ENCODE measurements at regions of chr9 and their contacts with region 1.

Region 1: GRCh38 chr9:34989003-34989945 is at the start of gene DNAJB5:
- DNase-seq: peak; percentile 99
- H3K4me3 Mint-ChIP-seq: peak within 1 kb of the TSS; percentile 89
- H3K27ac Mint-ChIP-seq: peak within 1 kb of the TSS; percentile 89
- H3K4me1 Mint-ChIP-seq: peaks cover 81% of the 10 kb centered on the region
- H3K27me3 Mint-ChIP-seq: no peaks in the 10 kb centered on the region
- total RNA-seq, gene DNAJB5: 11.5 to 12.0 TPM

Region 2: GRCh38 chr9:34328987-34329832 is 660.1 kb before region 1 on chr9 and contains the starts of genes KIF24 and NUDT2:
- CTCF ChIA-PET with region 1: no interaction called
- POLR2A ChIA-PET with region 1: no interaction called
- intact Hi-C with region 1: loop called (anchors 2 kb)
- DNase-seq: peak; percentile 98
- H3K4me3 Mint-ChIP-seq: peak within 1 kb of the TSS; percentile 97
- H3K27ac Mint-ChIP-seq: peak within 1 kb of the TSS; percentile 94
- H3K4me1 Mint-ChIP-seq: peaks cover 30% of the 10 kb centered on the region
- H3K27me3 Mint-ChIP-seq: no peaks in the 10 kb centered on the region
- total RNA-seq, gene KIF24: 5.6 to 5.7 TPM
- total RNA-seq, gene NUDT2: 42.4 to 43.3 TPM

Region 3: DNA sequence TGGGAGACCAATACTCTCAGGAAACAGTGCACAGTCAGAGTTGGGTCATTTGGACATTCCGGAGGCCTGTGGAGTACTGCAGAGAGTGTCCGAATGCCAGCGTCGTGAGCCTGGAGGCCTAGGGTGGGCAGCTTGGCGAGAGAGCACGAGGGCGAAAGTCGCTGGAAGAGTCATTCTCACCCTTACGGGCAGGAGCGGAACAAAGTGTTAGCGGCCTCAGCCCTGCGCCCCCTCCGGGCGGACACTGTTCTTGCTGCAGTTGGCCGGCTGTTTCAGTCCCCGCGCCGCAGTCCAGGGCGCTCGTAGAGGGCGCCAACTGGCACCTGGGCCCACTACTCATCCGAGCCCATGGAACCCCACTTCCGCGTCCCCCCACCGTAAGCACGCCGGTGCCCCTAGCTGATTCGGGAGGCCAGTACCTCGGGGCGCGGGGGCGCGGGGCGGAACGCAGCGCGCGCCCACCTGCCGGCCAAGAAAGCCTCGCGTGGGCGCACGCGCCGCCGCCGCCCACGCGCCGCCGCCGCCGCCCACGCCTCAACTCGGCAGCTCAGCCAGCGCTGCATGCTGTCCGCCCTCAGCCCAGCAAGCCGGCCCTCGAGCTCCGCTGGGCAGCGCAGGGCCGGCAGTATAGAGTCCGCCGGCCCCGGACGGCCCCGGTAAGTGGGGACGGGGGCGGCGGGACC is 179.6 kb before region 1 on chr9:
- CTCF ChIA-PET with region 1: no interaction called
- POLR2A ChIA-PET with region 1: no interaction called
- intact Hi-C with region 1: no loop called
- DNase-seq: no peak
- H3K4me3 Mint-ChIP-seq: no peak overlapping the region
- H3K27ac Mint-ChIP-seq: no peak overlapping the region
- H3K4me1 Mint-ChIP-seq: peaks cover 3% of the 10 kb centered on the region
- H3K27me3 Mint-ChIP-seq: peaks cover 43% of the 10 kb centered on the region

Region 4: DNA sequence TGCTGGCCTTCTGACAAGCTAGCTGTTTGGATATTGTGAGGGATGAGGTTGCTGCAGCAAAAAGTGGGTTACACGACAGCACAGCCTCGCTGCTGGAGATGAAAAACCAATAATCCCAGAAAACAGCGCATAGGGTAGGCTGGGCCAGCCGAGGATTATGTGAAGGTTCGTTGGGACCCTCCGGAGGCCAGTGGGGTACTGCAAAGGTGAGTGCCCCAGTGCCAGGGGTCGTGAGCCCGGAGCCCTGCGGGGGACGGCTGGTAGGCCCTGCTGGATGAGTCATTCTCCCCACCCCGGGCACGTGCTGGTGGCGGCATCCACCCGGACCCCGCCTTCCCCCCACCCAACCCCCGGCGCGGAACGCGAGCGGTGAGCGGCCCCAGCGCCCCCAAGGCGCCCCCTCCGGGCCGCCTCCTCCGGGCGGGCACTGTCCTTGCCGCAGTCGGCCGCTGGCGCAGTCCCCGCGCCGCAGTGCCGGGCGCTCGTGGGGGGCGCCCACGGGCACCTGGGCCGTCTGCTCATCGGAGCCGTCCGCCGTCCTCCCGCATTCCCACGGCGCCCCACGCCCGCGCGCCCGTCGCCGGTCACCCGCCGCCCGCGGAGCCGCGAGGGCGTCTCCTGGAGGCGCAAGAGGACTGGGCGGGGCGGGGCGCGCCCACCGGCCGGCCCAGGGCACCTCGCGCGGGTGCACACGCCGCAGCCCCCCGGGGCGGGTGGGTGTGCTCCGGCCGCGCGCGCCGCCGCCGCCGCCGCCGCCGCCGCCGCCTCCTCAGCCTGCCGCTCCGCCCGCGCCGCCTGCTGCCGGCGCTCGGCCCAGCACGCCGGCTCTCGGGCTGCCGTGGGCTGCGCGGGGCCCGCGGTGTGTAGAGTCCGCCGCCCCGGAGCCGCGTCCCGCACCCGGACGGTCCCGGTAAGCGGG is 31.5 kb before region 1 on chr9 and contains the start of gene PHF24:
- CTCF ChIA-PET with region 1: interaction called, 22 read pairs
- POLR2A ChIA-PET with region 1: interaction called, 3 read pairs
- intact Hi-C with region 1: loop called (anchors 2 kb)
- DNase-seq: peak; percentile 26
- H3K4me3 Mint-ChIP-seq: peak within 1 kb of the TSS; percentile 27
- H3K27ac Mint-ChIP-seq: no peak within 1 kb of the TSS
- H3K4me1 Mint-ChIP-seq: peaks cover 26% of the 10 kb centered on the region
- H3K27me3 Mint-ChIP-seq: peaks cover 47% of the 10 kb centered on the region
- total RNA-seq, gene PHF24: 0.12 TPM in 1 of 2 experiments, not detected in the other

Region 5: DNA sequence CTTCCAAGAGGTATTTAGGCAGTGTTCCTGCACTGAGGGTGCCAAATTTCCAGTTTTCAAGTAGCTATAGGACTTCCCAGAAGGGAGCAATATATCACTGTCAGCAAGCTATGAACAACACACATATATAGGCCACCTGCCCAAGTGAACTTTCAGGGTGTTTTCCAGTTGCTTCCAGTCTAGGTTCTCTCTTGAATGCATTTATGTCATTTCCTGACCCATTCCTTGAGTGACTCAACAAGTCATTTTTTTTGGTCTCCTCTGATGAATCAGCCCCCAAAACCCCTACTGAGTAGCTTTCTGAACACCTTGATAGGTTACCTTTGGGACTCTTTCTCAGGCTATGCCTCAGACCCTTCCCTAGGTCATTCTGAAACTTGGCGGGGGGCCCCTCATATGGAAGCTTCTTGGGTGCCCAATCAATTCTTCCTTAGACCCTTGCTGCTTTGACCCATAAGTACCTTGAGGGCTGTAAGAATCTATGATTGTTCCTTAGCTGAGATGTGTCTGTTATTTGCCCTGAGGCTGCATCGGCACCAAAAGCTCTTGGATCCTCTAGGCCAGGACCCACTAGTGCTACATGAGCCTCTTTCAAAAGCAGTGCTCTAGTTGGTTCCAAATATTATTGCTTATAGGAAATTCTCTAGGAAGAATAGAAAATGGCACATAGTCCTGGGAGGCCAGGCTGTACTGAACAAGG is 12.7 kb after region 1 on chr9:
- CTCF ChIA-PET with region 1: interaction called, 19 read pairs
- POLR2A ChIA-PET with region 1: interaction called, 5 read pairs
- intact Hi-C with region 1: loop called (anchors 1 kb)
- DNase-seq: peak; percentile 59
- H3K4me3 Mint-ChIP-seq: no peak overlapping the region
- H3K27ac Mint-ChIP-seq: peak overlapping the region; percentile 74
- H3K4me1 Mint-ChIP-seq: peaks cover 30% of the 10 kb centered on the region
- H3K27me3 Mint-ChIP-seq: no peaks in the 10 kb centered on the region

Region 6: GRCh38 chr9:35096035-35096849 is 107.0 kb after region 1 on chr9 and contains the start of gene PIGO:
- CTCF ChIA-PET with region 1: no interaction called
- POLR2A ChIA-PET with region 1: interaction called, 3 read pairs
- intact Hi-C with region 1: loop called (anchors 1 kb)
- DNase-seq: peak; percentile 93
- H3K4me3 Mint-ChIP-seq: peak within 1 kb of the TSS; percentile 84
- H3K27ac Mint-ChIP-seq: peak within 1 kb of the TSS; percentile 93
- H3K4me1 Mint-ChIP-seq: peaks cover 27% of the 10 kb centered on the region
- H3K27me3 Mint-ChIP-seq: no peaks in the 10 kb centered on the region
- total RNA-seq, gene PIGO: 19.3 to 20.9 TPM

Region 7: DNA sequence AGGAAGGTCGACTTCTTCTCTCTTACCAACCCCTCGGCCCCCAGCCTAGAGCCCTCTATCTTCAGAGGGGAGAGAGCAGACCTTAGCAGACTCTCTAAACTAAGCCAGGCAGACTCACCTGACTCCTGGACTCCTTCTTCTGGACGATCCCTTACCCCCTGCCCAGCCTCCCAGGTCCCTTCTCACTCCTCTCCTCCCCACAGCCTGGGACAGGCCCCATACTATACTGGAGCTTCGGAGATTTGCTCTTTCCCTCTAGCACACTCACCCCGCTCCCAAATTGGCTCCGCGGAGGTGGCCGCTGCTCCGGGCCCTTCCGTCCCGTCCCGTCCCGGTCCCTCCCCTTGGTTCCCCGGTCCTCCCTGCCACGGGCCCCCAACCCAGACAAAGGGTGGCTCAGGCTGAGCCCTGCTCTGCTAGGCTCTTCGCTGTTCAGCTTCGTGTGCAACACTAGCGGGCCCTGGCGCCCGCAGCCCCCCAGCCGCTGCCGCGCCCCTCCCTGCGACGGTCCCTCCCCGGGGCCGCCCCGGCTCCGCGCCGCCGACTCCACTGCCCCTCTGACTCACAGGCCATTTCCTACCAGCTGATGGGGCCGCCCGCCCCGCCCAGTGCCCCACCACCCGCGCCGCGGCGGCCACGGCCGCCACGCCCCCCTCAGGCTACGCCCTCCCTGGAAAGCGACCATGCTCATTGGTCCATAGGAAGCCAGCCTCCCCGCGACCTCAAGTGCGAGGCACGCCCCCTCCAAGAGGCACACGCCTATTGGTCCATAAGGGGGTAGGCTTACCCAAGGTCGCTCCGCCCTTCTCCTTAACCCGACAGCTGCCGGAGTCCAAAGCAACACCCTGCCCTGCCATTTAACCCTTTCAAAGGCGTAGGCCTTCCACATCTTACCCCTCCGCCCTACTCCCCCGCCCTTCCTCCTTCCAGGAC is 122.0 kb after region 1 on chr9:
- CTCF ChIA-PET with region 1: interaction called, 4 read pairs
- POLR2A ChIA-PET with region 1: no interaction called
- intact Hi-C with region 1: loop called (anchors 1 kb)
- DNase-seq: peak; percentile 98
- H3K4me3 Mint-ChIP-seq: peak overlapping the region; percentile 75
- H3K27ac Mint-ChIP-seq: peak overlapping the region; percentile 81
- H3K4me1 Mint-ChIP-seq: peaks cover 42% of the 10 kb centered on the region
- H3K27me3 Mint-ChIP-seq: no peaks in the 10 kb centered on the region

Region 8: DNA sequence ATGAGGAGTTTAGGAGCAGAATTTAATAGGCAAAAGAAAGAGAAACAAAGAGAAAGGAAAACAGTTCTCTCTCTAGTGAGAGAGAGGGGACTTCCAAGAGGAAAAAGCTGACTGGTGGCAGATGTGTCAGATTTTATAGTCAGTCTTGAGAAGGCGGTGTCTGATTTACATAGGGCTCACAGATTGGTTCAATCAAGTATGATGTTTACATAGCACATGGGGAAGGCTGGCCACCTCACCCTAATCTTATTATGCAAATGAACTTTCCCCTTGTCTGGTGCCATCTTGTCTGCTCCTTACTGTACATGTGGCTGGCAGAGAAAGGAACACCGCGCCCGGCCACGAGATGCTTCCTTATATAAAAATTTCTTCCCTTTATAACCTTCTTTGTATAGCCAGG is 197.2 kb after region 1 on chr9:
- CTCF ChIA-PET with region 1: no interaction called
- POLR2A ChIA-PET with region 1: no interaction called
- intact Hi-C with region 1: no loop called
- DNase-seq: no peak
- H3K4me3 Mint-ChIP-seq: no peak overlapping the region
- H3K27ac Mint-ChIP-seq: no peak overlapping the region
- H3K4me1 Mint-ChIP-seq: no peaks in the 10 kb centered on the region
- H3K27me3 Mint-ChIP-seq: peaks cover 2% of the 10 kb centered on the region